A549 (cell line): ENCODE measurements at regions of chr7 and their contacts with region 1.

Region 1: GRCh38 chr7:23247603-23248335 is 1.2 kb downstream of the GPNMB start:
- DNase-seq: no peak
- ATAC-seq: no peak
- H3K4me3 ChIP-seq: no peak overlapping the region
- H3K27ac ChIP-seq: no peak overlapping the region
- H3K4me1 ChIP-seq: no peaks in the 10 kb centered on the region
- CTCF ChIP-seq: no peak
- EP300 ChIP-seq: no peak
- POLR2A ChIP-seq: no peak
- RAD21 ChIP-seq: no peak

Region 2: DNA sequence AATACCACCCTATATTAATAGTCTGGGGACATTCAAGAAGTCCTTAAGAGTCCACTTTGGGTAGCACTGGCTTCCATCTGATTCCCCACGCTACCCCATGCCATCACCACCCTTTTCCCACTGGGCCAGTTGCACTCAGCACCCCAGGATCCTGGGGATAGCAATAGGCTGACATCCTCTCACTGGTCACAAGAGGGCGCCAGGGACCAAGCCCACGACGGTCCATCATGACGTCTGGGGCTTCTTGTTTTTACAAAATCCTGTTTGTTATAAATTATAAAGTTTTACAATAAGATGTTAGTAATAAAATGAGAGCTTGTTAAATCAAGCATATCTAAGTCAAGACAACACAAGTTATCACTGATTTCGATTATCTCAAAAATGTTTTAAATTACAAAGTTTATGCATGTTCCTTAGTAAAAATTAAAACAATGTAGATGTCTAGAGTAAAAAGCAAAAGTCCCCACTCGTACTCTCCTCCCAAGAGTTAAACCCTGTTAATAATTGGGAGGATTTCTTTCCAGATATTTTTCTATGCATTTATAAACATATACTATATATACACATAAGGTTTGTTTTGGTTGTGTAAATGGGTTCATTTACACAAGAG is 14.2 kb after region 1 on chr7:
- CTCF ChIA-PET with region 1: interaction called, 10 read pairs
- POLR2A ChIA-PET with region 1: no interaction called
- DNase-seq: peak; percentile 76 to 90
- ATAC-seq: peak; percentile 98 to 99
- H3K4me3 ChIP-seq: no peak overlapping the region
- H3K27ac ChIP-seq: no peak overlapping the region
- H3K4me1 ChIP-seq: no peaks in the 10 kb centered on the region
- CTCF ChIP-seq: peak; percentile 90
- EP300 ChIP-seq: no peak
- POLR2A ChIP-seq: no peak
- RAD21 ChIP-seq: peak; percentile 80 to 89